Ascending aorta (tissue), 2 donors: ENCODE measurements at regions of chr5 and their contacts with region 1.

Region 1: GRCh38 chr5:149442563-149443182 is 63.6 kb upstream of the IL17B start:
- DNase-seq: peak in 1 of 2 donors; percentile 89
- H3K4me3 ChIP-seq: no peak overlapping the region
- H3K27ac ChIP-seq: peak overlapping the region; percentile 58 to 71
- H3K4me1 ChIP-seq: peaks cover 7 to 10% of the 10 kb centered on the region in 2 donors
- H3K27me3 ChIP-seq: no peaks in the 10 kb centered on the region
- CTCF ChIP-seq: peak; percentile 86 to 95 (median 90)

Region 2: DNA sequence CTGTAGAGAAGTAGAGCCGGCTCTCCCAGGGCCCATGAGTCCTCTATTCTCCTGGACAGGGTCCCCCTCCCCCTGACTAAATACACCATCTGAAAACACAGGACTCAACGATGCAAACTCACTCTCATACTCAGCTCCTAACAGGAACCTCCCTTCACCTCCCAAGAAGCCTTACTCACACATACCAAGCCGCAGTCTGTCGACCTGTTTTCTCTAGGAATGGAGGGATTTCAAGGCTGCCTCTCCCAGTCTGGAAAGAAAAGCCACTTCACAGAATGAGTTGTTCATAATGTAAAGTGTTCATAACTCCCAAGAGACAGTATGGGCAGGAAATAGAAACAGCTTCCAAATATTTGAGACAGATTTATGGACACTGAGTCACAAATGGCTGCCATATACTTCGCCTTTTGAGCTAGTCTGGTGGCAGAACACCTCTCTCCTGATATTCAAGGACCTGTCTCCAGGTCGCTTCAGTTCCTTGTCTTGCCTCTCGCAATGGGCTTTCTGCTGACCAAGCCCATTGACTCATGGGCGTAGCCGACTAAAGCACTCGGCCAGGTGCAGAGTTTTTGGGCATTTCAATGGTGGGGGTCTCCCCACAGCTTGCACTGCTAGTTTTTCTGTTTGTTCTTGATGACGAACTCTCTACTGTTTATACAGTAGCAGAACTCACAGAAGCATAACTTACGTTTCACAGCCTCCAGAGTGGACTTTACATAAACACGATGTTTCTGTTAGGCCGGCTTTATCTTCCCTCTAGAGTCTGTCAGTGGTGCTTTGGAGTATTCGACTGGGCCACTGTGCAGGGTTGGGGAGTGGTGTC is 38.5 kb before region 1 on chr5:
- intact Hi-C with region 1: no loop called
- DNase-seq: peak in 1 of 2 donors; percentile 73
- H3K4me3 ChIP-seq: peak overlapping the region in 1 of 2 donors; percentile 14
- H3K27ac ChIP-seq: peak overlapping the region; percentile 88 to 90
- H3K4me1 ChIP-seq: peaks cover 16 to 27% of the 10 kb centered on the region in 2 donors
- H3K27me3 ChIP-seq: no peaks in the 10 kb centered on the region
- CTCF ChIP-seq: no peak

Region 3: GRCh38 chr5:149466457-149466972 is 23.8 kb after region 1 on chr5:
- intact Hi-C with region 1: no loop called
- DNase-seq: no peak
- H3K4me3 ChIP-seq: no peak overlapping the region
- H3K27ac ChIP-seq: no peak overlapping the region
- H3K4me1 ChIP-seq: peaks cover 4 to 15% of the 10 kb centered on the region in 2 donors
- H3K27me3 ChIP-seq: no peaks in the 10 kb centered on the region
- CTCF ChIP-seq: no peak

Region 4: GRCh38 chr5:149551200-149552037 is 108.7 kb after region 1 on chr5 and contains the start of gene CSNK1A1:
- intact Hi-C with region 1: loop called (anchors 1 kb)
- DNase-seq: peak; percentile 86 to 98
- H3K4me3 ChIP-seq: peak within 1 kb of the TSS; percentile 81 to 96
- H3K27ac ChIP-seq: peak within 1 kb of the TSS; percentile 95 to 98
- H3K4me1 ChIP-seq: peaks cover 7 to 26% of the 10 kb centered on the region in 2 donors
- H3K27me3 ChIP-seq: no peaks in the 10 kb centered on the region
- CTCF ChIP-seq: peak; percentile 88 to 93 (median 91)
- total RNA-seq, gene CSNK1A1: 219 TPM